Naive thymus-derived CD4-positive, alpha-beta T cell (primary cell): ENCODE measurements at regions of chr10 and their contacts with region 1.

Region 1: GRCh38 chr10:26486991-26487850 is 49.1 kb downstream of the APBB1IP start:
- DNase-seq: peak in 8 of 9 donors; percentile 50 to 86 (median 66)
- ATAC-seq: peak; percentile 85
- H3K4me3 ChIP-seq: peak overlapping the region; percentile 43
- H3K4me3 Mint-ChIP-seq: peak overlapping the region; percentile 8 to 83 (median 74)
- H3K27ac ChIP-seq: peak overlapping the region; percentile 84
- H3K27ac Mint-ChIP-seq: peak overlapping the region; percentile 90 to 97 (median 94)
- H3K4me1 ChIP-seq: peaks cover 56 to 64% of the 10 kb centered on the region in 2 donors
- H3K4me1 Mint-ChIP-seq: peaks cover 57 to 82% (median 74%) of the 10 kb centered on the region in 7 donors
- H3K27me3 ChIP-seq: no peaks in the 10 kb centered on the region
- H3K27me3 Mint-ChIP-seq: no peaks in the 10 kb centered on the region

Region 2: DNA sequence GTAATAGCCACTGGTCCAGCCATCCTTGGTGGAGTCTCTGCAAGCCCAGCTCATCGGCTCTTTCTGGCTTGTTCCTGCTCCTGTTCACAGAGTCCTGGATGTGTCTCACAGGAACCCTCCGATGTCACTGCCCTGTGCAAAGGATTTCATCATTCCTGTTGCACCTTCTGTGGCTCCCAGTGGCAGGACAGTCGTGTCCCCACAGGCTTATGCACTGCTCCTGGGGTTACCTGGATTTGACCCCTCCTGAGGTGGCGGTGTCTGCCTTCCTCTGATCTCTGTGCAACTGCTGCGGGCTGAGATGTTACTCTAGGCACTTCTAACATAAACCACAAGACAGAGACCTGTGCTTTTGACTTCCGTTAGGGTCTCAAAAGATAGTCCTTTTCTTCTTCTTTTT is 18.5 kb before region 1 on chr10:
- CTCF ChIA-PET with region 1: interaction called, 3 read pairs
- POLR2A ChIA-PET with region 1: interaction called, 5 read pairs
- intact Hi-C with region 1: loop called in 1 of 2 experiments (anchors 1 kb)
- DNase-seq: peak in 8 of 9 donors; percentile 20 to 82 (median 76)
- ATAC-seq: peak; percentile 94
- H3K4me3 ChIP-seq: peak overlapping the region; percentile 1
- H3K4me3 Mint-ChIP-seq: peak overlapping the region; percentile 66 to 93 (median 84)
- H3K27ac ChIP-seq: peak overlapping the region; percentile 33
- H3K27ac Mint-ChIP-seq: peak overlapping the region; percentile 83 to 96 (median 91)
- H3K4me1 ChIP-seq: peaks cover 64 to 76% of the 10 kb centered on the region in 2 donors
- H3K4me1 Mint-ChIP-seq: peaks cover 61 to 100% (median 92%) of the 10 kb centered on the region in 7 donors
- H3K27me3 ChIP-seq: no peaks in the 10 kb centered on the region
- H3K27me3 Mint-ChIP-seq: no peaks in the 10 kb centered on the region

Region 3: GRCh38 chr10:26474026-26474425 is 13.2 kb before region 1 on chr10:
- CTCF ChIA-PET with region 1: interaction called, 3 read pairs
- POLR2A ChIA-PET with region 1: interaction called, 5 read pairs
- intact Hi-C with region 1: loop called (anchors 1 kb)
- DNase-seq: no peak
- ATAC-seq: peak; percentile 35
- H3K4me3 ChIP-seq: no peak overlapping the region
- H3K4me3 Mint-ChIP-seq: peak overlapping the region in 9 of 10 donors; percentile 59 to 86 (median 71)
- H3K27ac ChIP-seq: peak overlapping the region; percentile 68
- H3K27ac Mint-ChIP-seq: peak overlapping the region; percentile 85 to 98 (median 95)
- H3K4me1 ChIP-seq: peaks cover 84 to 87% of the 10 kb centered on the region in 2 donors
- H3K4me1 Mint-ChIP-seq: peaks cover 70 to 97% (median 86%) of the 10 kb centered on the region in 7 donors
- H3K27me3 ChIP-seq: no peaks in the 10 kb centered on the region
- H3K27me3 Mint-ChIP-seq: no peaks in the 10 kb centered on the region

Region 4: DNA sequence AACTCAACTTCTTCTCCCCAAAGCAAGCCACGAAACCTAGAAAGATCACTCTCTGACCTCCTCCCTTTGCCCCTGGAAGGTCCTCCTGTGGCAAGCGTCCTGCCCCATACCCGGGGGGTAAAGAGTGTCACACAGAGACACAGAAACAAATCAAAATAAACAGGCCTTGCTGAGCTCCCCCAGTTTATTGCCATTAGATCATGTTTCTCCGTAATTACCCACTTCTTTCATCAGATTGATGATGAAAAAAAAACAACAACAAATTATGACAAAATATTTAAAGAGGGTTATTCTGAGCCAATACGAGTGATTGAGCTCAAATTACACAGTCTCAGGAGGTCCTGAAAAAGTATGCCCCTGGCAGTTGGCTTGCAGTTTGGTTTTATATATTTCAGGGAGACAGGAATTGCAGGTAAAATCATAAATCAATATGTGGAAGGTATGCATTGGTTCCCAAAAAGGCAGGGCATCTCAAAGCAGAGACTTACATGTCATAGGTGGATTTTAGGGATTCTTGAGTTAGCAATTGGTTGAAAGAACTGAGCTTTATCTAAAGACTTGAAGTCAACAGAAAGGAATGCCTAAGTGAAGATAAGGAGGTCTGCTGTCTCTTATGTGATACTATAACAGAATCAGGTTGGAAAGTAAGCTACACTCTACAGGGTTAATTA is 37.1 kb after region 1 on chr10:
- CTCF ChIA-PET with region 1: no interaction called
- POLR2A ChIA-PET with region 1: no interaction called
- intact Hi-C with region 1: loop called in 1 of 2 experiments (anchors 5 kb)
- DNase-seq: no peak
- ATAC-seq: no peak
- H3K4me3 ChIP-seq: no peak overlapping the region
- H3K4me3 Mint-ChIP-seq: no peak overlapping the region
- H3K27ac ChIP-seq: no peak overlapping the region
- H3K27ac Mint-ChIP-seq: peak overlapping the region in 8 of 9 donors; percentile 32 to 81 (median 53)
- H3K4me1 ChIP-seq: no peaks in the 10 kb centered on the region
- H3K4me1 Mint-ChIP-seq: peaks cover 6 to 43% (median 35%) of the 10 kb centered on the region in 7 donors
- H3K27me3 ChIP-seq: no peaks in the 10 kb centered on the region
- H3K27me3 Mint-ChIP-seq: no peaks in the 10 kb centered on the region

Region 5: GRCh38 chr10:26697163-26697921 is 210.1 kb after region 1 on chr10 and contains the start of gene PDSS1:
- CTCF ChIA-PET with region 1: no interaction called
- POLR2A ChIA-PET with region 1: no interaction called
- intact Hi-C with region 1: loop called in 1 of 2 experiments (anchors 5 kb)
- DNase-seq: peak; percentile 34 to 77 (median 60)
- ATAC-seq: peak; percentile 77
- H3K4me3 ChIP-seq: peak within 1 kb of the TSS; percentile 77
- H3K4me3 Mint-ChIP-seq: peak within 1 kb of the TSS; percentile 92 to 100 (median 98)
- H3K27ac ChIP-seq: peak within 1 kb of the TSS; percentile 85
- H3K27ac Mint-ChIP-seq: peak within 1 kb of the TSS; percentile 94 to 99 (median 97)
- H3K4me1 ChIP-seq: peaks cover 7 to 17% of the 10 kb centered on the region in 2 donors
- H3K4me1 Mint-ChIP-seq: peaks cover 28 to 47% (median 34%) of the 10 kb centered on the region in 7 donors
- H3K27me3 ChIP-seq: no peaks in the 10 kb centered on the region
- H3K27me3 Mint-ChIP-seq: no peaks in the 10 kb centered on the region
- total RNA-seq, gene PDSS1: 3.8 to 15.2 (median 4.7) TPM

Region 6: DNA sequence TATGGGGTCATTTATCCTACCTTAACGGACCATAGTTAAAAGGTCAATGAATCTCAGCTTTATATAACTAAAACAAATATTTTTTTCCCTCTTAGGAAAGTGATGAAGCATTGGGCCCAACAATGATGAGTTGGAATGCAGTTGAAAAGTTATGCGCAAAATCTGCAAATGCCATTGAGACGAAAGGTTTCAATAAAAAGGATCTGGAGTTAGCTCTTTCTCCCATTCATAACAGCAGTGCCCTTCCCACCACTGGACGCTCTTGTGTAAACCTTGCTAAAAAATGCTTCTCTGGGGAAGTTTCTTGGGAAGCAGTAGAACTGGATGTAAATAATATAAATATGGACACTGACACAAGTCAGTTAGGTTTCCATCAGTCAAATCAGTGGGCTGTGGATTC is 682.6 kb after region 1 on chr10:
- CTCF ChIA-PET with region 1: no interaction called
- POLR2A ChIA-PET with region 1: no interaction called
- intact Hi-C with region 1: no loop called
- DNase-seq: no peak
- ATAC-seq: no peak
- H3K4me3 ChIP-seq: no peak overlapping the region
- H3K4me3 Mint-ChIP-seq: no peak overlapping the region
- H3K27ac ChIP-seq: no peak overlapping the region
- H3K27ac Mint-ChIP-seq: no peak overlapping the region
- H3K4me1 ChIP-seq: no peaks in the 10 kb centered on the region
- H3K4me1 Mint-ChIP-seq: peaks cover 0 to 6% (median 0%) of the 10 kb centered on the region in 7 donors
- H3K27me3 ChIP-seq: no peaks in the 10 kb centered on the region
- H3K27me3 Mint-ChIP-seq: no peaks in the 10 kb centered on the region